ENCODE measurements at regions of chr19 and their contacts with region 1.

Region 1: GRCh38 chr19:14117668-14118164 is at the start of gene PRKACA:
- DNase-seq: peak; percentile 99
- total RNA-seq, gene PRKACA: 487 TPM

Region 2: GRCh38 chr19:14081325-14082093 is 36.2 kb before region 1 on chr19:
- intact Hi-C with region 1: loop called (anchors 5 kb)
- DNase-seq: peak; percentile 99

Region 3: DNA sequence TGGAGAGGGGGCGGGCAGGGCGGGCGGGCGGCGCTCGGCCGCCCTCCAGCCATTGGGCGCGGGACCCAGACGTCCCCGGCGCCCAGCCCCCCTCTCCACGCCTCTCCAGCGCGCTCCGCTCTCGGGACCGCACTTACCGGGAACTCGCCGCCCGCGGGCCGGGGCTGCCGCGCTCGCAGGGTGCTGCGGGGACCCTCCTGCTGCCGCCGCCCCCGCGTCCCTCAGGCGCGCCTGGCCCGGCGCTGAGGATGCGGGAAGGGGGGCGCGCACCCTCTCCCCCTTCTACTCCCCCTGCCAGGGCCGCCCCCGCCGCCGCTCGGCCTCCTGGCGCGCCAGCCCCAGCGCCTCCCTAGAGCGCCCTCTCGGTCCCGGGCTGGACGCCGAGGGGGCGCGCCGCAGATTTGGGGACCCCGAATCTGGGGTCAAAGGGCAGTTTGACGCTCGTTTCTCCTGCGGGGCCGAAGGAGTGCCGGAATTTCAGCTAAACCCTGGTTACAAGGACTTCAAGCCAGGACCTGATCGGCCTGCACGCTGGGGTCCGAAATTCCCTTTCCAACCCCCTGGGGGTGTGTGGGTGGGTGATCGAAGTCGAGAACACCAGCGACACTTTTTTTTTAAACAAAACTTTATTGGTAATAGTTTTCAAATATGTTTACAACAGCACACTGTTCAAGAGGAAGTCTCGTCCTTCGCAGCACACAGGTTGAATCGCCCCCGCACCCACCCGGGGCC is 26.5 kb before region 1 on chr19:
- intact Hi-C with region 1: loop called (anchors 2 kb)
- DNase-seq: no peak

Region 4: DNA sequence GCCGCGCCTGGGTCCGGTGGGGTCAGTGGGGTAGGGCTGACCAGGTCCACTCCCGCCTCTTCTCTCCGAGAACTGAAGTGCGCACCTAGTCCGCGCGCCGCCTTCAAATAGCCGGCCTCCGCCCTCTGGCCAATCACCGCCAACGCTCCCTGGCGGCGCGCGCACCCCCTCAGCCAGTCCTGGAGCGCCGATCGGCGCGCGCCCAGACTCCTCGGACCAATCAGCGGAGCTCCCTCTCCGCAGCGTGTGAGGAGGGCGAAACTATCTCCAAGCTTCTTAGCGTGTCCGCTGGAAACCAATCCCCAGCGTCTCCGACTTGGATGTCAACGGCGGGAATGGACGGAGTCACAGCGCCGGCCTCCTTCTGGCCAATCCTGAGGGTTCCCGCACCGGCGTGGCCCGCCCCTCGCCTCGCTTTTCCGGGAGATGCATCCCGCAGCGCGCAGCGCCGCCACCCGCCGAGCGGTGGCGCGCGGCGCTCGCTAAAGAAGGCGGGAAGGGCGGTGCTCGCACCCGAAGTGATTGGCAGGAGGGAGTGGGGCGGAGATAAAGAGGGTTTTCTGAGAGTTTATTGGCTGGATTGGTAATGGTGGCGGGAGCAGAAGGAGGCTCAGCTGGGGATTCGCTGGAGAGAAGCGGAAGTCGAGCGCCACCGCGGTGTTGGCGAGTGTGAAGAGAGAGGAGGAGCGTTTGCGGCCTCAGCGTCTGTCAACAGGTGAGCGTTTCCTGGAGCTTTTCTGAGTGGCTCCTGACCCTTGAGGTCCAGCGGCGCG is 19.0 kb after region 1 on chr19 and contains the start of gene ASF1B:
- intact Hi-C with region 1: loop called (anchors 1 kb)
- DNase-seq: peak; percentile 99
- total RNA-seq, gene ASF1B: 0.70 TPM

Region 5: GRCh38 chr19:14300303-14300702 is 182.6 kb after region 1 on chr19:
- intact Hi-C with region 1: no loop called
- DNase-seq: no peak